ENCODE measurements at regions of chr17 and their contacts with region 1.

Region 1: GRCh38 chr17:18183334-18184142 is at the start of gene ALKBH5:
- DNase-seq: peak; percentile 99
- H3K4me3 ChIP-seq: peak within 1 kb of the TSS; percentile 55 to 94 (median 94)
- H3K27ac ChIP-seq: peak within 1 kb of the TSS; percentile 94
- H3K4me1 ChIP-seq: peaks cover 52% of the 10 kb centered on the region
- H3K27me3 ChIP-seq: no peaks in the 10 kb centered on the region
- CTCF ChIP-seq: no peak
- total RNA-seq, gene ALKBH5: 87.7 to 118 TPM

Region 2: GRCh38 chr17:18070861-18071340 is 112.6 kb before region 1 on chr17:
- CTCF ChIA-PET with region 1: no interaction called
- dilution Hi-C with region 1: no loop called
- in situ Hi-C with region 1: no loop called
- intact Hi-C with region 1: no loop called
- DNase-seq: peak; percentile 17
- H3K4me3 ChIP-seq: peak overlapping the region in 1 of 3 experiments; percentile 9
- H3K27ac ChIP-seq: no peak overlapping the region
- H3K4me1 ChIP-seq: peaks cover 13% of the 10 kb centered on the region
- H3K27me3 ChIP-seq: no peaks in the 10 kb centered on the region
- CTCF ChIP-seq: no peak

Region 3: DNA sequence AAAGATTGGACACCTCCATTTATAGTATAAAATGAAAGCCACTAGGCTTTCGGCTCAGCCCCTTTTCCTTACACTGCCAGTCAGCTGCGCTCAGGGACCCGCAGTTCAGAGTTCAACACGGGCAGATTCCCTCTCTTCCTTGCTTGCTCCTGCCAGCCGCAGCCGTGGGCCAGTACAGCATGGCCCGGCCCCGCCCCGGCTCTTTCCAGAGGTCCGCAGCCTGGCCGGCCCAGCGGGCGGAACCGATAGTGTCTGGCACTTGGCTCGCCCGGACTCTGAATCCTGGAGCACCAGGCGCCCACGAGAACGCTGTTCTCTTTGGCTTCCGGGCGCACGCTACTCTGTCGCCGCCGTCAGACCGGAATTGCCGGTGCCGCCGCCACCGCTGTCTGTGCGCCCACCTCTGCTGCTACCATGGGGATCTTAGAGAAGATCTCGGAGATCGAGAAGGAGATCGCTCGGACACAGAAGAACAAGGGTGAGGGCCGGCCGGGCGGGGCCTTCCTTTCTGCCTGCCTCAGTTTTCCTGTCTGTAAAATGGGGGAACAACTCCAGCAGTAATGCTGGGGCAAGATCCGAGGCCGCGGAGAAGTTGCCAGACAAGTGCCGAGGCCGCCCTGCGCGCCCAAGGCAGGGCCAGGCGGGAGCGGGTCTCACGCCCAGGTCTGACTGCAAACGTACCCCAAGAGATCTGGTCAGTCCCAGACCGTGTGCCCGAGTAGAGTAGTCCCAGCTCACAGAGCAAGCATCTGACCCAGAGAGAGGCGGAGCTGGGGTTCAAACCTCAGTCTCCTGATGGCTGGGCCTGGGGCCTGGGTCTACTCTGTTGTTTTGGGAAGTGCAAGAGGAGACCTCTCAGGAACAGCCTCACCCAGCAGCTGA is 95.7 kb before region 1 on chr17 and contains the start of gene DRG2:
- CTCF ChIA-PET with region 1: no interaction called
- dilution Hi-C with region 1: no loop called
- in situ Hi-C with region 1: no loop called
- intact Hi-C with region 1: loop called (anchors 5 kb)
- DNase-seq: peak; percentile 87
- H3K4me3 ChIP-seq: peak within 1 kb of the TSS; percentile 58 to 98 (median 72)
- H3K27ac ChIP-seq: peak within 1 kb of the TSS; percentile 64
- H3K4me1 ChIP-seq: peaks cover 7% of the 10 kb centered on the region
- H3K27me3 ChIP-seq: no peaks in the 10 kb centered on the region
- CTCF ChIP-seq: peak in 1 of 2 donors; percentile 14
- total RNA-seq, gene DRG2: 36.3 to 37.5 TPM

Region 4: DNA sequence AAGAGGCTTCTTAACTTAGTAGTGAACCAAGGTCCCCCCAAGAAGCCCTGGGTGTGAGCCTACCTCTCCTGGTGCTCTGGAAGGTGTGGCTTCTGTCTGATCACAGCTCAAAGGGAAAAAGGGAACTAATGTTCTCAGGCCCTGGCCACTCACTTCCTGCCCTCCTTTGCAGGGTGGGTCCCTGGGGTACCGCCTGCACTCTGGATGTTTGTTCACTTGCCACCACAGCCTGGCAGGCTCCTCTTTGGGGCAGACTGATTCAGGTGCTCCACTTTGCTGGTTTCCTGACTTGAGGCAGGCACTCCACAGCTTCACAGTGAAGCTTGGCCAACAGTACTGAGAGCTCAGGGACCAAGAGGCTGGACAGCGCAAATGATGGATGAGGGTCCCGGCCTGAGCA is 80.9 kb before region 1 on chr17:
- CTCF ChIA-PET with region 1: no interaction called
- dilution Hi-C with region 1: no loop called
- in situ Hi-C with region 1: no loop called
- intact Hi-C with region 1: no loop called
- DNase-seq: no peak
- H3K4me3 ChIP-seq: no peak overlapping the region
- H3K27ac ChIP-seq: no peak overlapping the region
- H3K4me1 ChIP-seq: no peaks in the 10 kb centered on the region
- H3K27me3 ChIP-seq: no peaks in the 10 kb centered on the region
- CTCF ChIP-seq: no peak

Region 5: GRCh38 chr17:18141210-18141803 is 42.2 kb before region 1 on chr17:
- CTCF ChIA-PET with region 1: no interaction called
- dilution Hi-C with region 1: no loop called
- in situ Hi-C with region 1: no loop called
- intact Hi-C with region 1: loop called (anchors 2 kb)
- DNase-seq: peak; percentile 43
- H3K4me3 ChIP-seq: no peak overlapping the region
- H3K27ac ChIP-seq: no peak overlapping the region
- H3K4me1 ChIP-seq: no peaks in the 10 kb centered on the region
- H3K27me3 ChIP-seq: no peaks in the 10 kb centered on the region
- CTCF ChIP-seq: peak; percentile 47 to 51

Region 6: DNA sequence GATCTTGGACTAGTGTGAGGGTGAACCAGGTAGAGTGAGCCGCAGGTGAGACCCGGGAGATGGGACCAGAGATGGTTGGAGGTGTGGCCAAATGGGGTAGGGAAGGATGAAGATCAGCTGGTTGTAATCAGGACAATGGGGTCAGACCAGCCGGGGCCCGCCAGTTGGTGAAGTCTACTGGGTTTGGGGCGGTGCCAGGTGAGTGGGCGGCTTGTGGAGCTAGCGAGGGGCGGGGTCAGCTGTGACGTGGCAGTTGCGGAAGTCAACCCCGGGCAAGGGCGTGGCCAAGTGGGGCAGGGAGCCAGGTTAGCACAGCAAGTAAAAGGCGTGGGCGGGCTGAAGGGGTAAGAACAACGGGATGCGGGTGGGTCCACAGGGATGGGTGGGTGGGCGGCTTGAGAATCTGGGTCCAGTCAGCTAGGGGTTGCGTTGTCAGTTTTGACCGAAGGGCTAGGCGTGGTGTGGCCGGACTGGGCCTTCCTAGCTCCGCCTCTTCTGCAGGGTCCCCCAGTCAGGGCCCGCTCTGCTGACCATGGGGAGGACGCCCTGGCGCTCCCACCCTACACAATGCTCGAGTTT is 25.4 kb before region 1 on chr17:
- CTCF ChIA-PET with region 1: no interaction called
- dilution Hi-C with region 1: no loop called
- in situ Hi-C with region 1: no loop called
- intact Hi-C with region 1: loop called (anchors 2 kb)
- DNase-seq: peak; percentile 79
- H3K4me3 ChIP-seq: peak overlapping the region in 2 of 3 experiments; percentile 32 to 40
- H3K27ac ChIP-seq: no peak overlapping the region
- H3K4me1 ChIP-seq: peaks cover 13% of the 10 kb centered on the region
- H3K27me3 ChIP-seq: no peaks in the 10 kb centered on the region
- CTCF ChIP-seq: no peak

Region 7: GRCh38 chr17:18225121-18225566 is 41.6 kb after region 1 on chr17:
- CTCF ChIA-PET with region 1: no interaction called
- dilution Hi-C with region 1: loop called (anchors 5 kb)
- in situ Hi-C with region 1: no loop called
- intact Hi-C with region 1: no loop called
- DNase-seq: peak; percentile 91
- H3K4me3 ChIP-seq: peak overlapping the region; percentile 20 to 80 (median 22)
- H3K27ac ChIP-seq: no peak overlapping the region
- H3K4me1 ChIP-seq: peaks cover 14% of the 10 kb centered on the region
- H3K27me3 ChIP-seq: no peaks in the 10 kb centered on the region
- CTCF ChIP-seq: no peak

Region 8: GRCh38 chr17:18260332-18261144 is 77.0 kb after region 1 on chr17 and contains the start of gene MIEF2:
- CTCF ChIA-PET with region 1: no interaction called
- dilution Hi-C with region 1: no loop called
- in situ Hi-C with region 1: no loop called
- intact Hi-C with region 1: loop called (anchors 1 kb)
- DNase-seq: peak; percentile 93
- H3K4me3 ChIP-seq: peak within 1 kb of the TSS; percentile 91 to 95 (median 93)
- H3K27ac ChIP-seq: peak within 1 kb of the TSS; percentile 92
- H3K4me1 ChIP-seq: peaks cover 43% of the 10 kb centered on the region
- H3K27me3 ChIP-seq: no peaks in the 10 kb centered on the region
- CTCF ChIP-seq: no peak
- total RNA-seq, gene MIEF2: 11.9 to 56.3 TPM